Head of caudate nucleus (tissue), 42 donors: ENCODE measurements at regions of chr2 and their contacts with region 1.

Region 1: DNA sequence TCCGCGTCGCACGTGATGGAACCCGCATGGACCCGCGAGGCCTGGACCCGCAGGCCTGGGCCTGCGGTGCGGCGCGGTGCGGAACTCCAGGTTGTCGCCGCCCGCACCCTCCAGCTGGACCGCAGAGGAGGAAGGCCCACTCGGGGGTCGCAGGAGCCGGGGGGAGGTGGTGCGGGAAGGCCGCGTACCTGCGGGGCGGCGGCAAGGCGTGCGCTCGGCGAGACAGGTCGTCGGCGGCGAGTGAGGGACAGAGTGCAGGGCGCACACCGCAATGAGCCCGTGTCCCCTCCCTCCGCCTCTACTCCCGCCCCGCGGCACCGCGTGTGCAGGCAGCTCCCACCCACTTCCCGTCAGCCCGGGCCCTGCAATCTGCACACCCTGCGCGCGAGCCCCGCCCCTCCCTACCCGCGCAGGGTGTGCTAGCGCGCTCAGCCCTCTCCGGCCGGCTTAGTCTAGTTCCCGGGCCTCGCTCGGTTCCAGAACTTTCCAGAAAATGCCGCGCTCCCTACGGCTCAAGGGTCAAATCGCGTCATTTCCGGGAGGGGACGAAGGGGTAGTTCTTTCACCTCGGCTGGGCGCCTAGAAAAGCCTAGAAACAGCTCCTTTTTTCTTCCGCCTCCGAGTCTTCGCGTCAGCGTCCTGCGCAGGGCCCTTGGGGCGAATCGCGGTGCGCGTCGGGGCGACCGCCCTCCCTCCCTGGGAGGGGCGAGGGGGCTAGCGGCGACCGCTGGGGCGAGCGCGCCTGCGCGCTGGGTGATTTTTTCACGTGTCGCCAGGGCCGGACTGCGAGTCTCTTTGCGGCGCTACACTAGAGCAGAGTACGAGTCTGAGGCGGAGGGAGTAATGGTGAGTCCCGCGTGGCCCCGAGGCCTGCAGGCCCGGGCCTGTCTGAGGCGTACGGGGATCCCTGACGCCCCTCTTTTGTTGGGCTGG is at the starts of genes HSPD1 and HSPE1:
- DNase-seq: peak; percentile 95 to 100 (median 98)

Region 2: GRCh38 chr2:197434541-197435513 is 65.0 kb before region 1 on chr2 and contains the start of gene SF3B1:
- intact Hi-C with region 1: loop called (anchors 10 kb)
- DNase-seq: peak; percentile 94 to 100 (median 98)

Region 3: GRCh38 chr2:197453161-197453914 is 46.5 kb before region 1 on chr2 and contains the start of gene COQ10B:
- intact Hi-C with region 1: loop called (anchors 1 kb)
- DNase-seq: peak; percentile 98 to 100 (median 100)

Region 4: GRCh38 chr2:197515739-197516392 is 16.0 kb after region 1 on chr2 and contains the start of gene MOB4:
- intact Hi-C with region 1: loop called (anchors 2 kb)
- DNase-seq: peak; percentile 86 to 98 (median 96)

Region 5: GRCh38 chr2:198811198-198811597 is 1311.3 kb after region 1 on chr2:
- intact Hi-C with region 1: no loop called
- DNase-seq: no peak